ENCODE measurements at regions of chr4 and their contacts with region 1.

Region 1: GRCh38 chr4:158809611-158810486 is 41.0 kb downstream of the FNIP2 start:
- DNase-seq: no peak
- ATAC-seq: peak; percentile 40

Region 2: DNA sequence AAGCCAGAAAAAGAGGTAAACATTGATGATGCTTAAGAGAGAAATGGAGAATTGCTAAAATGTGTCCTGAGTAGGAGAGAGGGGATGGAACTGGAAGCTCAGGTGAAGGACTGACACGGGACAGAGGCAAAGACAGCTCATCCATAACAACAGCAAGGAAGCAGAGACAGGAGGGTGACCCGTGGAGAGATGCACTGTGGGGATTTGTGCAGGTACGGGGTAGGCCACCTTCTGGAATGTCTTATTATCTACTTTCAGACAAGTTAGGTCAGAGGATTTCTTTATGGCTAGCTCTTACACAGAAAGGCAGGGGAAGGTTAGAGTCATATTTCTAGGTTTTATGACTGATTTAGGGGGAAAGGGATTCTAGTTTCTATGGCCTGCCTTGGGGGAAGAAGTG is 256.5 kb before region 1 on chr4:
- intact Hi-C with region 1: no loop called
- DNase-seq: no peak
- ATAC-seq: no peak

Region 3: GRCh38 chr4:158760866-158761265 is 49.0 kb before region 1 on chr4:
- intact Hi-C with region 1: no loop called
- DNase-seq: no peak
- ATAC-seq: no peak

Region 4: GRCh38 chr4:158821228-158821971 is 11.6 kb after region 1 on chr4:
- intact Hi-C with region 1: loop called (anchors 2 kb)
- DNase-seq: no peak
- ATAC-seq: no peak

Region 5: GRCh38 chr4:158841540-158841939 is 31.7 kb after region 1 on chr4:
- intact Hi-C with region 1: loop called (anchors 5 kb)
- DNase-seq: no peak
- ATAC-seq: peak; percentile 97

Region 6: GRCh38 chr4:158996669-158997074 is 186.8 kb after region 1 on chr4:
- intact Hi-C with region 1: no loop called
- DNase-seq: no peak
- ATAC-seq: peak; percentile 56

Region 7: GRCh38 chr4:159051245-159052071 is 241.6 kb after region 1 on chr4:
- intact Hi-C with region 1: no loop called
- DNase-seq: no peak
- ATAC-seq: no peak